Prostate gland (tissue), 2 donors: ENCODE measurements at regions of chr1 and their contacts with region 1.

Region 1: GRCh38 chr1:15847100-15847892 is at the start of gene SPEN:
- DNase-seq: peak; percentile 96
- H3K4me3 ChIP-seq: peak within 1 kb of the TSS; percentile 87 to 93
- H3K27ac ChIP-seq: peak within 1 kb of the TSS; percentile 96 to 98
- H3K4me1 ChIP-seq: no peaks in the 10 kb centered on the region
- H3K27me3 ChIP-seq: no peaks in the 10 kb centered on the region
- CTCF ChIP-seq: peak in 2 of 4 experiments; percentile 41 to 46
- POLR2A ChIP-seq: peak; percentile 81
- total RNA-seq, gene SPEN: 31.9 to 48.3 TPM

Region 2: DNA sequence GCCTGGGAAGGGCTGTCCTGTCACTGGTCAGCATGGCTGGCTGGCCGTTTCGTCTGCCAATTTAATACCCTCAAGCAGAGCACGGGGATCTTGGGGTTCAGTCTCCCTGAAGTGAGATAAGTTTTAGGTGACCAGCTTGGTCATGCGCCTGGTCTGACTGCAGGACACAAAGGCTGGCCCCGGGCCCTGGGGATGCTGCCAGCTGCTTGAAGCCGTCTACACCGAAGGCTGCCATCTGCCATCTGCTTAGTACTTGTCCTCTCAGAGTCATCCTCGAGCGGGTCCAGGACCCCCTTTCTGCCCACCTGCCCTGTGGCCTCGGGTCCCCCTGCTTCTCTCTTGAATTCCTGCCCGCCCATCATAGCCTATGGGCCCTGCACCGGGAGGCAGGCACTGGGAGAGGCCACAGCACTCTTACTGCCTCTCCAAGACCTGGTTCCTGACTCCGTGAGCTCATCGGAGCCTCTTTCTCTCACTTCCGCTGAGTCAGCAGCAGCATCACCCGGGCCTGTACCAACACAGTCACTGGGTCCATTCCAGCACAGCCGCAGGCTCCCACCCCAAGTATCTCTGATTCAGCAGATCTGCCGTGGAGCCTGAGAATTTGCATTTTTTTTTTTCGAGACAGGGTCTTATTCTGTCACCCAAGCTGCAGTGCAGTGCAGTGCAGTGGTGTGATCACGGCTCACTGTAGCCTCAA is 81.7 kb before region 1 on chr1:
- intact Hi-C with region 1: no loop called
- DNase-seq: no peak
- H3K4me3 ChIP-seq: no peak overlapping the region
- H3K27ac ChIP-seq: no peak overlapping the region
- H3K4me1 ChIP-seq: peaks cover 5% of the 10 kb centered on the region
- H3K27me3 ChIP-seq: no peaks in the 10 kb centered on the region
- CTCF ChIP-seq: no peak
- POLR2A ChIP-seq: no peak

Region 3: GRCh38 chr1:15835741-15836510 is 11.4 kb before region 1 on chr1:
- intact Hi-C with region 1: loop called (anchors 2 kb)
- DNase-seq: peak; percentile 99
- H3K4me3 ChIP-seq: peak overlapping the region; percentile 53 to 79
- H3K27ac ChIP-seq: peak overlapping the region; percentile 99 to 100
- H3K4me1 ChIP-seq: no peaks in the 10 kb centered on the region
- H3K27me3 ChIP-seq: no peaks in the 10 kb centered on the region
- CTCF ChIP-seq: peak in 1 of 4 experiments; percentile 13
- POLR2A ChIP-seq: peak; percentile 94

Region 4: GRCh38 chr1:15885701-15886610 is 38.7 kb after region 1 on chr1:
- intact Hi-C with region 1: loop called (anchors 5 kb)
- DNase-seq: peak; percentile 96
- H3K4me3 ChIP-seq: peak overlapping the region; percentile 15 to 27
- H3K27ac ChIP-seq: peak overlapping the region; percentile 86 to 91
- H3K4me1 ChIP-seq: no peaks in the 10 kb centered on the region
- H3K27me3 ChIP-seq: no peaks in the 10 kb centered on the region
- CTCF ChIP-seq: peak in 1 of 4 experiments; percentile 15
- POLR2A ChIP-seq: peak; percentile 64